GM13976 (cell line): ENCODE measurements at regions of chr4 and their contacts with region 1.

Region 1: GRCh38 chr4:37389967-37390580 is 145.5 kb downstream of the NWD2 start:
- DNase-seq: peak; percentile 52
- CTCF ChIP-seq: peak; percentile 46

Region 2: GRCh38 chr4:36399762-36400353 is 990.2 kb before region 1 on chr4:
- in situ Hi-C with region 1: loop called (anchors 10 kb)
- DNase-seq: no peak
- CTCF ChIP-seq: peak; percentile 67